Endothelial cell of umbilical vein (primary cell): ENCODE measurements at regions of chr17 and their contacts with region 1.

Region 1: GRCh38 chr17:27236717-27237315 is 57.1 kb upstream of the WSB1 start:
- DNase-seq: peak; percentile 86
- H3K4me3 ChIP-seq: no peak overlapping the region
- H3K27ac ChIP-seq: no peak overlapping the region
- H3K4me1 ChIP-seq: no peaks in the 10 kb centered on the region
- H3K27me3 ChIP-seq: no peaks in the 10 kb centered on the region
- CTCF ChIP-seq: peak; percentile 71 to 73
- POLR2A ChIP-seq: no peak

Region 2: DNA sequence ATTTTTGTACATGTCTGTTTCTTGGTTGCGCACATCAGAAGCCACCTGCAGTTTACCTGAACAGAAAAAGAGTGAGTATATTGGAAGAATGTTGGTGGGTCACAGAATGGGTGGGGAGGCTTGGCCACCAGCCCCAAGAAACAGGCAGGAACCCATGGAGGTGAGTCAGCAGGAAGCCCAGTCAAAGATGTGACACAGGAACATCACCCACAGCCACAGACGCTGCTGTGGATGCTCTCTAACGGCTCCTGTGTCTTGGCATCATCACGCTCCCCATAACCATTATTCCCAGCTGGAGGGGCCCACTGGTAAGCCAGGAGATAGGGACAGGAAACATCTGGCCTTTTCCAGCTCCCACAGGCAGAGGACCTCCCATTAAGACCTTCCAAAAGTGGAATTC is 36.9 kb before region 1 on chr17:
- CTCF ChIA-PET with region 1: interaction called, 26 read pairs
- POLR2A ChIA-PET with region 1: no interaction called
- dilution Hi-C with region 1: no loop called
- intact Hi-C with region 1: loop called (anchors 1 kb)
- DNase-seq: peak; percentile 10
- H3K4me3 ChIP-seq: no peak overlapping the region
- H3K27ac ChIP-seq: no peak overlapping the region
- H3K4me1 ChIP-seq: peaks cover 5% of the 10 kb centered on the region
- H3K27me3 ChIP-seq: no peaks in the 10 kb centered on the region
- CTCF ChIP-seq: no peak
- POLR2A ChIP-seq: no peak

Region 3: GRCh38 chr17:27265333-27265732 is 28.5 kb after region 1 on chr17:
- CTCF ChIA-PET with region 1: interaction called, 10 read pairs
- POLR2A ChIA-PET with region 1: no interaction called
- dilution Hi-C with region 1: no loop called
- intact Hi-C with region 1: no loop called
- DNase-seq: peak; percentile 93
- H3K4me3 ChIP-seq: no peak overlapping the region
- H3K27ac ChIP-seq: peak overlapping the region; percentile 55
- H3K4me1 ChIP-seq: peaks cover 33% of the 10 kb centered on the region
- H3K27me3 ChIP-seq: peaks cover 0 to 4% of the 10 kb centered on the region in 2 experiments
- CTCF ChIP-seq: no peak
- POLR2A ChIP-seq: peak; percentile 63

Region 4: GRCh38 chr17:27315322-27315721 is 78.5 kb after region 1 on chr17:
- CTCF ChIA-PET with region 1: interaction called, 17 read pairs
- POLR2A ChIA-PET with region 1: interaction called, 4 read pairs
- dilution Hi-C with region 1: no loop called
- intact Hi-C with region 1: no loop called
- DNase-seq: no peak
- H3K4me3 ChIP-seq: no peak overlapping the region
- H3K27ac ChIP-seq: no peak overlapping the region
- H3K4me1 ChIP-seq: no peaks in the 10 kb centered on the region
- H3K27me3 ChIP-seq: no peaks in the 10 kb centered on the region
- CTCF ChIP-seq: no peak
- POLR2A ChIP-seq: no peak

Region 5: DNA sequence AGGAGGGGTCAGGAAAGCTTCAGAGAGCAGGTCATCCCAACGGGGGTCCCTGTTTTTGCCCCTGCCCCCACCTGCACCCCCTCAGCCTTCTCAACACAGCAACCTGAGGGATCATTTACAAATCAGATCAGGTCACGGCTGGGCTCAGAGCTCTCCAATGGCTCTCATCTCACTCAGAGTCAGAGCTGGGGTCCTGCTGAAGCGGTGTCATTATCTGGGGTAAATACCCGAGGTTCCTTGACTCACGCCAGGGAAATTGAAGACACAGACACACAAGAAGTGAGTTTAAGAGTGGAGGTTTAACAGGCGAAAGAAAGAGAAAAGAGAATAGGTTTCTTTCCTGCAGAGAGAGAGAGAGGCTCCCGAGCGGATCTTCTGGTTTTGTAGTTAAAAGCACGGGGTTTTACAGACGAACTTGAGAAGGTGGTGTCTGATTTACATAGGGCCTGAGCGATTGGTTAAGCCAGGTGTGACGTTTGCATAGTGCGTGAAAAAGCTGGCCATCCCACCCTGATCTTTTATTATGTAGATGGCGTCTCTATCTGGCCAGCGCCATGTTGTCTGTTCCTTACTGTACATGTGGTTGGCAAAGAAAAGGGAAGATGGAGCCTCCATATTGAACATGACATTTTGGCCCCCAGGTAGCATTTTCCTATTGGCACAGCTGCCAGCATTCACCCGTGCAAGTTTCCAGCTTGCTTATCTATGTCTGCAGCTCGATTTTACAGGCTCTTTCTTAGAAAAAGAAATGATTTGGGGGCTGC is 108.5 kb after region 1 on chr17:
- CTCF ChIA-PET with region 1: interaction called, 15 read pairs
- POLR2A ChIA-PET with region 1: no interaction called
- dilution Hi-C with region 1: no loop called
- intact Hi-C with region 1: no loop called
- DNase-seq: no peak
- H3K4me3 ChIP-seq: no peak overlapping the region
- H3K27ac ChIP-seq: peak overlapping the region; percentile 55
- H3K4me1 ChIP-seq: peaks cover 44% of the 10 kb centered on the region
- H3K27me3 ChIP-seq: no peaks in the 10 kb centered on the region
- CTCF ChIP-seq: no peak
- POLR2A ChIP-seq: no peak

Region 6: DNA sequence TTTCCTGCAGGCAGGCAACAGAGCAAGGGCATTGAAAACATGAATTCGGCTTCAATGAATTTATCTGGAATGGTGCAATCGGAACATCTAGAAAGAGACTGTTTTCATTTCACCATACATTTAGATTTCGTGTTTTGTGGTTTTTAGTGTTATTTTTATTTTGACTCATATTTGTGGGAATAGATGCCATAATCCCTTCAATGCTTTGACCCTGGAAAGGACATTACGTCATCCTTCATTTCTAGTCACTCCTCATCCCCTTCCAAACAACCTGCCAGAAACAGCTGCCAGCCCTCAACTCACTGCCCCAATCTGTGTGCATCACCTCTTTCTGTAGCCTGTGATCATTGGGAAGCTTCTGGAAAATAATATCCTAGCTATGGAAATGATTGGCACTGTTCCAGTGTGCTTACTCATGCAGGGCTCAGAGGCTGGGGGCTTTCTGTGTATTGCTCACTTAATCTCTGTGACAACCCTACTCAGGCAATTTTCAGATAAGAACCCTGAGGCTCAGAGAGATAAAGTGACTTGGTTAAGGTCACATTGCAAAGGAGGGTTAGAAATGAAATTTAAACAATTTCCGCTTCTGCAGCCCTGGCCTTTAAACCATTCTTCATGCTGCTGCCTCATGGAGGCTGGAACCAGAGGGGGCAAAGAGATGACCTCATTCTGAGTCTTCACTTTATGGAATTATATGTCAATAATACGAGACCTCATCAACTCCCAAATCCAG is 209.9 kb after region 1 on chr17:
- CTCF ChIA-PET with region 1: interaction called, 5 read pairs
- POLR2A ChIA-PET with region 1: no interaction called
- dilution Hi-C with region 1: no loop called
- intact Hi-C with region 1: loop called (anchors 5 kb)
- DNase-seq: peak; percentile 97
- H3K4me3 ChIP-seq: no peak overlapping the region
- H3K27ac ChIP-seq: peak overlapping the region; percentile 75
- H3K4me1 ChIP-seq: peaks cover 23% of the 10 kb centered on the region
- H3K27me3 ChIP-seq: no peaks in the 10 kb centered on the region
- CTCF ChIP-seq: no peak
- POLR2A ChIP-seq: no peak